GM12878 (cell line): ENCODE measurements at regions of chr7 and their contacts with region 1.

Region 1: DNA sequence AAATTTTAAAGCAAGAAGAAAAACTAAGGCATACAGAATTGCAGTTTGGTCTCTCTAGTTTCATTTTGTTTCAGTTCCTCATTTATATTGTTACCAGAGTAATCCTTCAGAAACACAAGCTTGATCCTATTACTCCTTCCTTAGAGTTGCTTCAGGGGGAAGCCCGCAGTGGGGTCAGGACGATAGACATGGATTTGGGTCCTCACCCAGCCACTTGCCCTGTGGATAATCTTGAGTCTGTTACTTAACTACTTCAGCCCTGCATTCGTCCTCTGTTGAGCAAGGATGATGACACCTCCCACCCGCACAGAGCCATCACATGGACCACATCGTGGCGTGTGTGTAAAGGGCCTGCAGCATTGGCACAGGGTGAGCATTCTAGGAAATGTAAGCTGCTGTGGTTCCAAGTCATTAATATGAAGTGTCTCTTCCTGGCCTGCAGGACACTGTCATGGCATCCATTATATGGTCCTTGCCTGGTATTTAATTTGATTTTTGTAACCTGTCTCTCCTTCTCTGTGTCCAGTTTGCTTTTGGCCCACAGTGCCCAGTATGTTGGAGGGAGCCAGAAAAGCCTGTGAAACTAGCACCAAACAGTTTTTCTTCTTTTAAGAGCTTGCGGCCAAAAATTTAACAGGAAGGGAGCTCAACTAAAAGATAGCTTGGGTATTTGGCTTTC is 111.2 kb downstream of the EEPD1 start:
- DNase-seq: no peak
- ATAC-seq: peak; percentile 71
- H3K4me3 ChIP-seq: no peak overlapping the region
- H3K27ac ChIP-seq: no peak overlapping the region
- H3K4me1 ChIP-seq: peaks cover 22% of the 10 kb centered on the region
- H3K27me3 ChIP-seq: no peaks in the 10 kb centered on the region
- CTCF ChIP-seq: no peak
- EP300 ChIP-seq: peak; percentile 24 to 33; a peak in 2 of 4 replicates
- POLR2A ChIP-seq: no peak
- RAD21 ChIP-seq: no peak

Region 2: GRCh38 chr7:36192053-36192824 is 72.0 kb before region 1 on chr7:
- CTCF ChIA-PET with region 1: interaction called, 3 read pairs
- POLR2A ChIA-PET with region 1: no interaction called
- RAD21 ChIA-PET with region 1: interaction called, 4 read pairs
- SMC1A ChIA-PET with region 1: interaction called, 17 read pairs
- in situ Hi-C with region 1: no loop called
- intact Hi-C with region 1: loop called (anchors 5 kb)
- DNase-seq: peak; percentile 11
- ATAC-seq: peak; percentile 71
- H3K4me3 ChIP-seq: peak overlapping the region; percentile 36; the same call in 1 of the 2 replicates
- H3K27ac ChIP-seq: no peak overlapping the region
- H3K4me1 ChIP-seq: no peaks in the 10 kb centered on the region
- H3K27me3 ChIP-seq: no peaks in the 10 kb centered on the region
- CTCF ChIP-seq: no peak
- EP300 ChIP-seq: peak; percentile 73 to 89
- POLR2A ChIP-seq: no peak
- RAD21 ChIP-seq: no peak

Region 3: GRCh38 chr7:36250317-36250716 is 13.9 kb before region 1 on chr7:
- CTCF ChIA-PET with region 1: interaction called, 5 read pairs
- POLR2A ChIA-PET with region 1: interaction called, 4 read pairs
- RAD21 ChIA-PET with region 1: no interaction called
- SMC1A ChIA-PET with region 1: interaction called, 19 read pairs
- in situ Hi-C with region 1: no loop called
- intact Hi-C with region 1: no loop called
- DNase-seq: no peak
- ATAC-seq: no peak
- H3K4me3 ChIP-seq: no peak overlapping the region
- H3K27ac ChIP-seq: no peak overlapping the region
- H3K4me1 ChIP-seq: no peaks in the 10 kb centered on the region
- H3K27me3 ChIP-seq: no peaks in the 10 kb centered on the region
- CTCF ChIP-seq: no peak
- EP300 ChIP-seq: no peak
- POLR2A ChIP-seq: no peak
- RAD21 ChIP-seq: no peak

Region 4: GRCh38 chr7:36280840-36281812 is 16.9 kb after region 1 on chr7:
- CTCF ChIA-PET with region 1: interaction called, 15 read pairs
- POLR2A ChIA-PET with region 1: interaction called, 10 read pairs
- RAD21 ChIA-PET with region 1: interaction called, 62 read pairs
- SMC1A ChIA-PET with region 1: interaction called, 92 read pairs
- in situ Hi-C with region 1: no loop called
- intact Hi-C with region 1: loop called (anchors 2 kb)
- DNase-seq: no peak
- ATAC-seq: peak; percentile 48
- H3K4me3 ChIP-seq: no peak overlapping the region
- H3K27ac ChIP-seq: no peak overlapping the region
- H3K4me1 ChIP-seq: peaks cover 16% of the 10 kb centered on the region
- H3K27me3 ChIP-seq: no peaks in the 10 kb centered on the region; a peak in 1 of 4 replicates
- CTCF ChIP-seq: no peak
- EP300 ChIP-seq: no peak
- POLR2A ChIP-seq: no peak
- RAD21 ChIP-seq: no peak

Region 5: DNA sequence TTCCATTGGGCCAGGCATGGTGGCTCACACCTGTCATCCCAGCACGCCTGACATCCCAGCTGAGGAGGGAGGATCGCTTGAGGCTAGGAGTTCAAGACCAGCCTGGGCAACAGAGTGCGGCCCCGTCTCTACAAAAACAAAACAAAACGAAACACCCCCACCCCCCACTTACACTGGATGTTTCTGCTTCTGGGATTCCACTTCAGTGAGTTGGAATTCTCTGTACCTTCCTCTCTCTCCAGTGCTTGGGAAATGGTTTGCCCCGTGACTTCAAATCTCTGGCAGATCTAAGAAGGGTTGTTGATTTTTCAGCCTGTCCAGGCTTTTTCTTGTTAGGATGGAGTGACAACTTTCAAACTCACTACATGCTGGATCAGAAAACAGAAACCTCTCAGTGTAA is 232.3 kb after region 1 on chr7:
- CTCF ChIA-PET with region 1: no interaction called
- POLR2A ChIA-PET with region 1: no interaction called
- RAD21 ChIA-PET with region 1: no interaction called
- SMC1A ChIA-PET with region 1: no interaction called
- in situ Hi-C with region 1: no loop called
- intact Hi-C with region 1: no loop called
- DNase-seq: no peak
- ATAC-seq: no peak
- H3K4me3 ChIP-seq: no peak overlapping the region
- H3K27ac ChIP-seq: no peak overlapping the region
- H3K4me1 ChIP-seq: no peaks in the 10 kb centered on the region
- H3K27me3 ChIP-seq: no peaks in the 10 kb centered on the region; a peak in 2 of 4 replicates
- CTCF ChIP-seq: no peak
- EP300 ChIP-seq: no peak
- POLR2A ChIP-seq: no peak
- RAD21 ChIP-seq: no peak